Endothelial cell of umbilical vein (primary cell): ENCODE measurements at regions of chr2 and their contacts with region 1.

Region 1: GRCh38 chr2:223970343-223971128 is 13.3 kb downstream of the MRPL44 start:
- DNase-seq: peak; percentile 76
- H3K4me3 ChIP-seq: no peak overlapping the region
- H3K27ac ChIP-seq: no peak overlapping the region
- H3K4me1 ChIP-seq: no peaks in the 10 kb centered on the region
- H3K27me3 ChIP-seq: no peaks in the 10 kb centered on the region
- CTCF ChIP-seq: peak; percentile 65 to 68
- POLR2A ChIP-seq: no peak

Region 2: GRCh38 chr2:223957092-223957851 is 13.3 kb before region 1 on chr2 and contains the start of gene MRPL44:
- CTCF ChIA-PET with region 1: interaction called, 21 read pairs
- POLR2A ChIA-PET with region 1: no interaction called
- dilution Hi-C with region 1: no loop called
- intact Hi-C with region 1: no loop called
- DNase-seq: peak; percentile 95
- H3K4me3 ChIP-seq: peak within 1 kb of the TSS; percentile 89 to 99 (median 95)
- H3K27ac ChIP-seq: peak within 1 kb of the TSS; percentile 58
- H3K4me1 ChIP-seq: peaks cover 38% of the 10 kb centered on the region
- H3K27me3 ChIP-seq: no peaks in the 10 kb centered on the region
- CTCF ChIP-seq: no peak
- POLR2A ChIP-seq: peak; percentile 90
- total RNA-seq, gene MRPL44: 27.7 and 31.5 TPM in 2 replicates

Region 3: GRCh38 chr2:224272237-224272910 is 301.8 kb after region 1 on chr2:
- CTCF ChIA-PET with region 1: interaction called, 19 read pairs
- POLR2A ChIA-PET with region 1: no interaction called
- dilution Hi-C with region 1: no loop called
- intact Hi-C with region 1: no loop called
- DNase-seq: no peak
- H3K4me3 ChIP-seq: no peak overlapping the region
- H3K27ac ChIP-seq: no peak overlapping the region
- H3K4me1 ChIP-seq: no peaks in the 10 kb centered on the region
- H3K27me3 ChIP-seq: peaks cover 6 to 7% of the 10 kb centered on the region in 2 experiments
- CTCF ChIP-seq: no peak
- POLR2A ChIP-seq: no peak

Region 4: DNA sequence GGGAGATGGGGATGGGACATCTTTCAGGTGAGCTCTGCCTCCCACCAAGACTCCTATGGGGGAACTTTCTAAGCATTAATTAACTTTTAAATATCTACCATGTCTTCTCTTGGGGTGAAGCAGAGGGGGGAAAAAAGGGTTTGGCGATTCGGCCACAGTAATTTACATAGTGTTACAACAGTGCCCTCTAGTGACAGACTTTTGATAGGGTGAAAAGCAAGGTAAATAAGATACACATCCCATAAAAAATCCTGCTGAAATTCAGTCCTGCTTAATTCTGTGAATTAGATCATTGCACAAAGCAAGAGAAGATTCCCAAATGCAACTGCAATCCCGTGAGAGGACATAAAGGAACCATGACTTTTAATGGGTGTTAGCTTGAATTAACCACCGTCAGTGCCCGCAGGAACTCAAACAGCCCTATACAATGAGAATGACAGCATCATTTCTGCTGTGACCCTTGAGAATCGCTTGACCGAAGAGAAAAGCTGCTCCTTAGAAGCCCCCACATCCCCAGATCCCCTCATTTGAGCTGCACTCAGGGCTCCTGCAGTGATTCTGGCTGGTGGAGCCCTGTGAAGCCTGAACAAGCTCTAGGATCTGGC is 398.6 kb after region 1 on chr2:
- CTCF ChIA-PET with region 1: interaction called, 35 read pairs
- POLR2A ChIA-PET with region 1: no interaction called
- dilution Hi-C with region 1: no loop called
- intact Hi-C with region 1: no loop called
- DNase-seq: no peak
- H3K4me3 ChIP-seq: no peak overlapping the region
- H3K27ac ChIP-seq: no peak overlapping the region
- H3K4me1 ChIP-seq: no peaks in the 10 kb centered on the region
- H3K27me3 ChIP-seq: no peaks in the 10 kb centered on the region
- CTCF ChIP-seq: peak; percentile 49 to 50
- POLR2A ChIP-seq: no peak

Region 5: GRCh38 chr2:224650815-224651439 is 680.4 kb after region 1 on chr2:
- CTCF ChIA-PET with region 1: interaction called, 14 read pairs
- POLR2A ChIA-PET with region 1: no interaction called
- dilution Hi-C with region 1: no loop called
- intact Hi-C with region 1: loop called (anchors 2 kb)
- DNase-seq: peak; percentile 61
- H3K4me3 ChIP-seq: no peak overlapping the region
- H3K27ac ChIP-seq: no peak overlapping the region
- H3K4me1 ChIP-seq: no peaks in the 10 kb centered on the region
- H3K27me3 ChIP-seq: no peaks in the 10 kb centered on the region
- CTCF ChIP-seq: peak; percentile 49 to 60
- POLR2A ChIP-seq: no peak